ENCODE measurements at regions of chr7 and their contacts with region 1.

Region 1: DNA sequence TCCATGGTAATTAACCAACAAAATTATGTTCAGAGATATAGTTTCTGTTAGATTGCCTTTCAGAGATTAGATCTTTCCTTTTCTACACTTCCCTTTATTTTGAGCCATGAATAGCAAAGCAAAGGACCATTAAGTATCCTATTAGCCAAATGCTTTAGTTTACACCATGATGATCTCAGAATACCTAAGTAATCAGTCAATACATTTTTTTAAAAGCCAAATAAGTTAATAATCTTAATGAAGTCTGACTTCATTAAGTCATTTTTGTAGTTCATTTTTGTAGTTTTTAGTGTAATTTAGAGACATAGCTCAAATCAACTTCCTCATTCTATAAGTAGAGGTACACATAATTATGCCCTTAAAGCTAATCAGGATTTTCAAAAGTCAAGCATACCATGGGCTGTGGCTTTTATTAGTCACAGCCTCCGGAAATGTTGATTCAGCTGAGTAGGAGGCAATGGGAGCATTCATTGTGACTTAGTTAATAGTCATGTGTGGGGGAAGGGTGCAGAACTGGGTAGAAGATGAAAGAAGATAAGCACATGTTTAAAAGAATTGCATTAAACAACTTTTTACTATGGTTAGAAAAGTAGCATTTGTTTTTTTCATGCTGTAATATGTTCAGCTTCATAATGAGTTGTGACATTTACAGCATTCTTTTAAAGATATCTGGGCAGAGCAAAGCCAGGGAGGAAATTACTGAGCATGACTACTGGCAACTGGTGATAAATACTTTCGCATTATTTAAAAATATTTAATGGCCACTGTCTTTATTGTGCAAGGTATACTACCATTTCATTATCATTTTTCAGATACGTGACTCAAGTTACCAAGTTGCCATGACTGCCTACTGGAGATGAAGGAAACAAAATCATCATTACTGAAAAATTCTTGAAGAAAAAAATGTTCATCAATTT is 57.3 kb upstream of the CCDC71L start:
- DNase-seq: no peak
- ATAC-seq: peak; percentile 88
- H3K4me3 Mint-ChIP-seq: no peak overlapping the region
- H3K27ac Mint-ChIP-seq: no peak overlapping the region
- H3K4me1 Mint-ChIP-seq: peaks cover 12% of the 10 kb centered on the region
- H3K27me3 Mint-ChIP-seq: no peaks in the 10 kb centered on the region
- CTCF ChIP-seq: no peak

Region 2: GRCh38 chr7:106704000-106704840 is 14.0 kb before region 1 on chr7:
- CTCF ChIA-PET with region 1: interaction called, 4 read pairs
- POLR2A ChIA-PET with region 1: interaction called, 7 read pairs
- intact Hi-C with region 1: loop called (anchors 1 kb)
- DNase-seq: no peak
- ATAC-seq: peak; percentile 34
- H3K4me3 Mint-ChIP-seq: no peak overlapping the region
- H3K27ac Mint-ChIP-seq: no peak overlapping the region
- H3K4me1 Mint-ChIP-seq: peaks cover 8% of the 10 kb centered on the region
- H3K27me3 Mint-ChIP-seq: no peaks in the 10 kb centered on the region
- CTCF ChIP-seq: no peak

Region 3: GRCh38 chr7:106731187-106731586 is 13.0 kb after region 1 on chr7:
- CTCF ChIA-PET with region 1: interaction called, 100 read pairs
- POLR2A ChIA-PET with region 1: interaction called, 15 read pairs
- intact Hi-C with region 1: loop called (anchors 1 kb)
- DNase-seq: no peak
- ATAC-seq: peak; percentile 77
- H3K4me3 Mint-ChIP-seq: peak overlapping the region; percentile 13
- H3K27ac Mint-ChIP-seq: no peak overlapping the region
- H3K4me1 Mint-ChIP-seq: peaks cover 31% of the 10 kb centered on the region
- H3K27me3 Mint-ChIP-seq: no peaks in the 10 kb centered on the region
- CTCF ChIP-seq: no peak